Right ventricle myocardium inferior (tissue), 1 donor: ENCODE measurements at regions of chr3 and their contacts with region 1.

Region 1: GRCh38 chr3:196969660-196970546 is 1.3 kb upstream of the PIGZ start:
- DNase-seq: peak; percentile 88
- ATAC-seq: peak; percentile 88

Region 2: DNA sequence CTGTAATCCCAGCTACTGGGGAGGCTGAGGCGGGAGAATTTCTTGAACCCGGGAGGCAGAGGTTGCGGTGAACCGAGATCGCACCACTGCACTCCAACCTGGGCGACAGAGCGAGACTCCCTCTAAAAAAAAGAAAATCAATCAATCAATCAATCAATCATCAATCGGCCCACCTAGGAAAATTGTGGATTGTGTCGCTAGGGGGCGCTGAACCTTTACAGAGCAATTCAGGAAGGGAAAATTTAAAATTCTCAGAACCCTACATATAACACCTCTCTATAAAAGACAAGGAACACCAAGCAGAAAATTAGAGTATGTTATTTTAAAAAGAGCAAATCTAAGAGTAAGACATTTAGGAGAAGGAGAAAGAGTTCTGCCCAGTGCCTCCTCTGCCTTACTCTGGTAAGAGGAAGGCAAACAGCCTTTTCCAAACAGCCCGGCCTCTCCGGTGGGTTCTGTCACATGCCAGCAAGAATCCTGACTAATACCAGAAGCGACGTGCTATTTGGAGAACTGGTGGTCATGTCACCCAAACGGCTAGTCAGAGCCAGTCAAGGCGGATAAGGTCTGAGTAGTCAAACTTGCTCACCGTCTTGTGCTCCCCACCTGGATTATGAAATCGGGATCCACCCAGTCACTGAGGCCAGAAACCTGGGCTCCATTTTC is 432.5 kb before region 1 on chr3:
- intact Hi-C with region 1: no loop called
- DNase-seq: no peak
- ATAC-seq: no peak

Region 3: DNA sequence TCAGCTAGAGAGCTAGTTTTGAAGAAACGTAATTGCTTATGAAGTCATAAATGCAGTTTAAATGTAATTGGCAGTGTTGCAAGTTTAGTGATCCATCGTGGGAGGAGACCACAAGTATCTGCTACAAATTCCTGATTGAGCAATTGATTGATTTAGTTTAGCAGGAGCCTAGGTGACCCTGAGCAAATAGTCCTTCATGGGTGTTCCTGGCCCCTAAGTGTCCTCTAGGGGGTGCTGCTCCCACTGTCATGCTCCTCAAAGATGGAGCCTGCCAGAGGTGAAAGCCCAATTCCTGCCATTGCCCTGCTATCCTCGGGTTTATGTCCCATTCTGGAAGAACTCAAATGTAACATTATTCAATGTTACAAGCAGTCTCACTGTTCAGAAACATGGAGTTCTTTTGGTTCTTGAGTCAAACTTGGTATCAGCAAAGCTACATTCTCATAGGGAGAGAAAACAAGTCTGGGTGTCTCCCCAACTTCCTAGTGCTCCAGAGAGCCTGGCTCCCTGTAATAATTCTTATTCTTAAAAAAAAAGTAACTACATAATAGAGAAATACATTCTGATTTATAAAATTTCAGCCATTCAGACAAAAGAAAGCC is 132.0 kb before region 1 on chr3:
- intact Hi-C with region 1: loop called (anchors 2 kb)
- DNase-seq: no peak
- ATAC-seq: peak; percentile 54